ENCODE measurements at regions of chr7 and their contacts with region 1.

Region 1: DNA sequence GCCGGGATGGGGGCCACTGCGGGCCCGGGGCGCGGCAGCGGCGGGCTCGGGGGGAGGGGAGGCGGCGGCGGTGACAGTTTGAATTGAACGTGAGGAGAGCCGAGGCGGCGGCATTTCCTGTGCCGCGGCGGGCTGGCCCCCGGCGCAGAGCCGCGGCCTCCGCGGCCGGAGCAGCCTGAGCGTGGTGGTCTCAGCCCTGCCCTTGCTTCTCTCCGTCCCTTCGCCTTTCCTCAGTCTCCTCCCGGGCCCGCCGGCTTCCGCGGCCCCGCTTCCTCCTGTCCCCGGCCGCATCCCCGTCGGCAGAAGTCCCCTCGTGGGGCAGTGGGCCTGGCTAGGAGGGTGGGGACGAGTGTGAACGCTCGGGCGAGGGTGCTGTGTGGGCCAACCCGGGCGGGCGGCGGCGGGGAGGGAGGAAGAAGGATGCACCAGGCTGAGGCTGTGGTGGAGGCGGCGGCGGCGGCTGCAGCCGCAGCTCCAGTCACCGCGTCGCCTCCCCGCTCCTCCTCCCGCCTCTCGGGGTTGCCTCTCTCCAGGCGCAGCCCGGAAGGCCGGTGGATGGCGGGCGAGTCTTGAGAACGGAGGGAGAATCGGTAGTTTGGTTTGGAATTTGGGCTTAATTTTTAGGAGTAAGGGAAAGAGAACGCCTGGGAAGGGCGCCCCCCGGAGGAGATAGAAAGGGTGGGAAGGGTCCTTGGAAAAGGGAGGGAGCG is 690 bp downstream of the SEPTIN7 start:
- DNase-seq: peak; percentile 63 to 90 (median 79)
- ATAC-seq: peak; percentile 27
- H3K4me3 ChIP-seq: peak overlapping the region; percentile 58 to 84
- H3K4me3 Mint-ChIP-seq: peak overlapping the region; percentile 91
- H3K27ac ChIP-seq: peak overlapping the region; percentile 98
- H3K27ac Mint-ChIP-seq: peak overlapping the region; percentile 98
- H3K4me1 ChIP-seq: peaks cover 49% of the 10 kb centered on the region
- H3K4me1 Mint-ChIP-seq: peaks cover 48% of the 10 kb centered on the region
- H3K27me3 ChIP-seq: no peaks in the 10 kb centered on the region
- H3K27me3 Mint-ChIP-seq: no peaks in the 10 kb centered on the region
- CTCF ChIP-seq: peak; percentile 26

Region 2: DNA sequence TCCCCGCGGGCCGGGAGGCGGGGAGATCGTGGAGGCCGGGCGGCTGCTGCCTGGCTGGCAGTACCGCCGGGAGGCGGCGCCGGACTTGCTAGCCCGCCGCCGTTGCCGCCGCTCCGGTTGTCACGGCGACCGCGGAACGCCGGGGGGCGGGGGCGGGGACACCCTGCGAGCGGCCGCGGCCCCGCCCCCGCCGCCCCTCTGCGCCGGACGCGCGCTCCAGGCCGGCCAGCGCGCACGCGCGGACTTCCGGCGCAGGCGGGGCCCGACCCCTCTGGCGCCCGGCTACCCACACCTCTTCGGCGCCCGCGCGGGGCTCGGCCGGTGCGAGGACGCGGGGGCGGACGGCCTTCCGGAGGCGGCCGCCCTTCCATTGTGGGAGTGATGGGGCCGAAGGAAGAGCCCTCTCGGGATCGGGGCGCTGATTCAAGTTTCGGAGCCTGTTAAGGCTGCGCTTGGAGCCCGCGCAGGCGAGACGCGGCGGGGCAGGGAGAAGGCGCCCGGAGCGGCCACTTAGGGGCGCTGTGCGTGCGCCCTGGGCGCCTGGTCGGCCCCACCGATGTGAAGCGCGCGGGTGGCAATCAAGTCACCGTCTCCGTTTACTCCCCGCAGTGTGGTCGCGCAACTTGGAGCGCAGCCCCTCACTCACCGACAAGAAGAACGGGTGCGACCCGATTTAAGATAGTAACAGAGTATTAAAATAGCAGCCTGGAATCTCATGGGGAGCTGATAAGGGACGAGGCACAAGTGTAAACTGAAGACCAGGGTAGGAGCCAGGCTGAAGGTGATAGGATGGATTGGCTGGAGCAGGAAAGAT is 763.8 kb before region 1 on chr7:
- CTCF ChIA-PET with region 1: no interaction called
- POLR2A ChIA-PET with region 1: no interaction called
- intact Hi-C with region 1: loop called in 1 of 2 experiments (anchors 1 kb)
- DNase-seq: peak; percentile 76 to 96 (median 90)
- ATAC-seq: peak; percentile 71
- H3K4me3 ChIP-seq: peak overlapping the region; percentile 44 to 66
- H3K4me3 Mint-ChIP-seq: peak overlapping the region; percentile 89
- H3K27ac ChIP-seq: peak overlapping the region; percentile 26 to 49
- H3K27ac Mint-ChIP-seq: peak overlapping the region; percentile 80
- H3K4me1 ChIP-seq: peaks cover 25% of the 10 kb centered on the region
- H3K4me1 Mint-ChIP-seq: peaks cover 32% of the 10 kb centered on the region
- H3K27me3 ChIP-seq: no peaks in the 10 kb centered on the region
- H3K27me3 Mint-ChIP-seq: no peaks in the 10 kb centered on the region
- CTCF ChIP-seq: peak; percentile 74

Region 3: GRCh38 chr7:35707422-35707821 is 94.1 kb before region 1 on chr7:
- CTCF ChIA-PET with region 1: interaction called, 8 read pairs
- POLR2A ChIA-PET with region 1: interaction called, 23 read pairs
- intact Hi-C with region 1: loop called in 1 of 2 experiments (anchors 1 kb)
- DNase-seq: no peak
- ATAC-seq: no peak
- H3K4me3 ChIP-seq: no peak overlapping the region
- H3K4me3 Mint-ChIP-seq: no peak overlapping the region
- H3K27ac ChIP-seq: no peak overlapping the region
- H3K27ac Mint-ChIP-seq: no peak overlapping the region
- H3K4me1 ChIP-seq: peaks cover 13% of the 10 kb centered on the region
- H3K4me1 Mint-ChIP-seq: peaks cover 23% of the 10 kb centered on the region
- H3K27me3 ChIP-seq: no peaks in the 10 kb centered on the region
- H3K27me3 Mint-ChIP-seq: no peaks in the 10 kb centered on the region
- CTCF ChIP-seq: no peak

Region 4: DNA sequence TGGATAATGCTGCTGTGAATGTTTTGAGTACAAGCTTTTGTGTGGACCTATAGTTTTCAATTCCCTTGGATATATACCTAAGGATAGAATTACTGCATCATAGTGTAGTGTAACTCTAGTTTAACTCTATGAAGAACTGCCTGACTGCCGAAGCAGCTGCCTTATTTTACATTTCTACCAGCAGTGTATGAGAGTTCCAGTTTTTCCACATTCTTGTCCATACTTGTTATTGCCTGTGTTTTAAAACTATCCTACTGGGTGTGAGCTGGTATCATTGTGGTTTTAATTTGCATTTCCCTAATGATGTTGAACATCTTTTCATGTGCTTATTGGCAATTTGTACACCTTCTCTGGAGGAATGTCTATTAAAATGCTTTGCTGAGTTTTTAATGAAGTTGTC is 15.0 kb after region 1 on chr7:
- CTCF ChIA-PET with region 1: interaction called, 4 read pairs
- POLR2A ChIA-PET with region 1: interaction called, 26 read pairs
- intact Hi-C with region 1: loop called in 1 of 2 experiments (anchors 1 kb)
- DNase-seq: no peak
- ATAC-seq: no peak
- H3K4me3 ChIP-seq: no peak overlapping the region
- H3K4me3 Mint-ChIP-seq: peak overlapping the region; percentile 26
- H3K27ac ChIP-seq: no peak overlapping the region
- H3K27ac Mint-ChIP-seq: no peak overlapping the region
- H3K4me1 ChIP-seq: peaks cover 14% of the 10 kb centered on the region
- H3K4me1 Mint-ChIP-seq: peaks cover 81% of the 10 kb centered on the region
- H3K27me3 ChIP-seq: no peaks in the 10 kb centered on the region
- H3K27me3 Mint-ChIP-seq: no peaks in the 10 kb centered on the region
- CTCF ChIP-seq: no peak

Region 5: DNA sequence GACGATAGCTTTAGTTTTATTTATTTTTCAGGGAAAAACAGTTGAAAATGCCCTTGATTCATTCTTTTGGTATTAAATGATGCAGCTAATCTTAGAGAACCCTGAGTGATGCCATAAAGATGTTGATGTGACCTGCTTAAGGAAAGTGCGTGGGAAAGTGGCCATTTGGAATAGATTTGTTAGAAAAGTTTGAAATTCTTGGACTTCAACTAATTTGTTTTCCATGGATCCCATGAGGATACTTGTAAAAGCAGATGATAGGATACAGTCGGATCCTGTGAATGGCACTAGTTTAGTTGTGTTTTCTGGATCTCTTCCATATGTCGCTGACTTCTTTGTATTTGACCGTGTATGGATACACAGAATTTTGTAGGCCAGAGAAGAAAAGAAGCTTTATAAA is 68.3 kb after region 1 on chr7:
- CTCF ChIA-PET with region 1: no interaction called
- POLR2A ChIA-PET with region 1: interaction called, 3 read pairs
- intact Hi-C with region 1: loop called in 1 of 2 experiments (anchors 5 kb)
- DNase-seq: no peak
- ATAC-seq: no peak
- H3K4me3 ChIP-seq: no peak overlapping the region
- H3K4me3 Mint-ChIP-seq: no peak overlapping the region
- H3K27ac ChIP-seq: no peak overlapping the region
- H3K27ac Mint-ChIP-seq: no peak overlapping the region
- H3K4me1 ChIP-seq: no peaks in the 10 kb centered on the region
- H3K4me1 Mint-ChIP-seq: peaks cover 41% of the 10 kb centered on the region
- H3K27me3 ChIP-seq: no peaks in the 10 kb centered on the region
- H3K27me3 Mint-ChIP-seq: no peaks in the 10 kb centered on the region
- CTCF ChIP-seq: no peak

Region 6: GRCh38 chr7:36366718-36367560 is 565.4 kb after region 1 on chr7:
- CTCF ChIA-PET with region 1: no interaction called
- POLR2A ChIA-PET with region 1: no interaction called
- intact Hi-C with region 1: loop called (anchors 5 to 10 kb)
- DNase-seq: peak; percentile 88 to 96 (median 92)
- ATAC-seq: peak; percentile 96
- H3K4me3 ChIP-seq: peak overlapping the region; percentile 65 to 73
- H3K4me3 Mint-ChIP-seq: peak overlapping the region; percentile 94
- H3K27ac ChIP-seq: peak overlapping the region; percentile 62 to 71
- H3K27ac Mint-ChIP-seq: peak overlapping the region; percentile 85
- H3K4me1 ChIP-seq: peaks cover 4% of the 10 kb centered on the region
- H3K4me1 Mint-ChIP-seq: peaks cover 6% of the 10 kb centered on the region
- H3K27me3 ChIP-seq: peaks cover 0 to 2% of the 10 kb centered on the region in 2 experiments
- H3K27me3 Mint-ChIP-seq: peaks cover 2% of the 10 kb centered on the region
- CTCF ChIP-seq: peak; percentile 91